Mucosa of descending colon (tissue), 3 donors: ENCODE measurements at regions of chr6 and their contacts with region 1.

Region 1: GRCh38 chr6:132798869-132799538 is 567 bp upstream of the SLC18B1 start:
- DNase-seq: peak; percentile 83 to 88 (median 88)
- ATAC-seq: peak; percentile 96
- H3K4me3 ChIP-seq: peak overlapping the region; percentile 40
- H3K4me1 ChIP-seq: no peaks in the 10 kb centered on the region
- CTCF ChIP-seq: peak; percentile 86

Region 2: DNA sequence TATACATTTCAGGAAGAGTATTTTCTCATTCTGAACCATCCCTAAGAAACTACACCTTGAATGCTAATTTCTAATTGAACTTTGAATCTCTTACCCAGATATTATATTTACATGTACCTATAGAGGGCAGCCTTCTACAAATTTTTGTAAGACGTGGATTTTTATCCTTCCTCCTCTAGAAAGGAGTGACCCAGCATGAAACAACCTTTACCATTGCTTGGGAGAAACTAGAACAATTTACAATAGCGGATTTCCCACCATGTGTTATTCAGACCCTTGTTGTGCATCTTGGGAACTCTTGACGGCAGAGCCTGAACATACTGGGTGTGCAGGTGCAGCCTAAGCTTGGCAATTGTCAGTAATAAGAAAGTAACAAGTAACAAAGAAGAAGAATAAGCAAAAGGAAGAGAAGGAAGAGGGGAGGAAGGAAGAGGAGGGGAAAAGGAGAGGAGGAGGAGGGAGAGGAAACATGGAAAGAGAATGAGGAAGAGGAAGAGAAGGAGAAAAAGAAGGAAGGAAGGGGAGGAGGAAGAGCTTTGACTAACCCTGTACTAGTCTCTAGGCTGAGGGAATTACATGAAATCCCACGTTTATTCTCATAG is 129.2 kb before region 1 on chr6:
- intact Hi-C with region 1: loop called in 1 of 2 experiments (anchors 10 kb)
- DNase-seq: no peak
- ATAC-seq: peak; percentile 73
- H3K4me3 ChIP-seq: no peak overlapping the region
- H3K4me1 ChIP-seq: no peaks in the 10 kb centered on the region
- CTCF ChIP-seq: no peak